ENCODE measurements at regions of chr2 and their contacts with region 1.

Region 1: DNA sequence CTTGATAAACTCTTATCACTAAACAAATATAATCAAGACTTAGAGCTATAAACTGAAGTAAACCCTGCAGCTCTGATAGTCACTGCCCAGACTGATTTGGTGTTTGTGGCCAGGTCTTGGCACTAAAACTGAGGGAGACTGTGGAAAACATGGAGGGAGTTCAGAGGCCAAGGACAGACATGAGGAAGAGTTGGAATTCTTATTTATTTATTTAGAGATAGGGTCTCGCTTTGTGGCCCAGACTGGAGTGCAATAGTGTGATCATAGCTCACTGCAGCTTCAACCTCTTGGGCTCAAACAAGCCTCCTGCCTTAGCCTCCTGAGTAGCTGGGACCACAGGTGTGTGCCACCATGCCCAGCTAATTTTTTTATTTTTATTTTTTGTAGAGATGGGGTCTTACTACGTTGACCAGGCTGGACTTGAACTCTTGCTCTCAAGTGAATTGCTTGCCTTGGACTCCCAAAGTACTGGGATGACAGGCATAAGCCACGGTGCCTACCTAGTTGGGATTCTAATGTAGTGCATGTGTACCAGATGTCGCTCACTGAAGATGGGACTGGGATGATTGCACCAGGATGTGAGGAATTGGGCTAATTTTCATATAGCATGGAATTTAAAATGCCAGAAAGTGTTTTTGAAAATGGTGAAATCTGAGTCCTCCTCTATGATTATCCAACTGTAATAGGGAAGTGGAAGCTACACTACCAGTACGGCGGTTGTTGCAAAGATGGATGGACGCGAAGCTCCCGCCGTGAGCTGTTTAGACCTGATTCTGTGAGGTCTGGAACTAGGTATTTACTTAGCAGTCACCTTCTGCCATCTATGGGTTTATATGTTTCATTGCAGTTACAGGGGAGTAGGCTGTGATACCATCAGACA is 52.7 kb upstream of the CTLA4 start:
- DNase-seq: peak in 1 of 2 donors; percentile 66
- ATAC-seq: peak; percentile 85
- H3K4me3 ChIP-seq: no peak overlapping the region
- H3K27ac ChIP-seq: no peak overlapping the region
- H3K4me1 ChIP-seq: peaks cover 0 to 2% of the 10 kb centered on the region in 2 donors
- H3K27me3 ChIP-seq: no peaks in the 10 kb centered on the region

Region 2: GRCh38 chr2:203484266-203485112 is 330.4 kb before region 1 on chr2:
- intact Hi-C with region 1: loop called (anchors 1 to 5 kb)
- DNase-seq: no peak
- ATAC-seq: peak; percentile 73
- H3K4me3 ChIP-seq: no peak overlapping the region
- H3K27ac ChIP-seq: no peak overlapping the region
- H3K4me1 ChIP-seq: peaks cover 0 to 2% of the 10 kb centered on the region in 2 donors
- H3K27me3 ChIP-seq: no peaks in the 10 kb centered on the region

Region 3: DNA sequence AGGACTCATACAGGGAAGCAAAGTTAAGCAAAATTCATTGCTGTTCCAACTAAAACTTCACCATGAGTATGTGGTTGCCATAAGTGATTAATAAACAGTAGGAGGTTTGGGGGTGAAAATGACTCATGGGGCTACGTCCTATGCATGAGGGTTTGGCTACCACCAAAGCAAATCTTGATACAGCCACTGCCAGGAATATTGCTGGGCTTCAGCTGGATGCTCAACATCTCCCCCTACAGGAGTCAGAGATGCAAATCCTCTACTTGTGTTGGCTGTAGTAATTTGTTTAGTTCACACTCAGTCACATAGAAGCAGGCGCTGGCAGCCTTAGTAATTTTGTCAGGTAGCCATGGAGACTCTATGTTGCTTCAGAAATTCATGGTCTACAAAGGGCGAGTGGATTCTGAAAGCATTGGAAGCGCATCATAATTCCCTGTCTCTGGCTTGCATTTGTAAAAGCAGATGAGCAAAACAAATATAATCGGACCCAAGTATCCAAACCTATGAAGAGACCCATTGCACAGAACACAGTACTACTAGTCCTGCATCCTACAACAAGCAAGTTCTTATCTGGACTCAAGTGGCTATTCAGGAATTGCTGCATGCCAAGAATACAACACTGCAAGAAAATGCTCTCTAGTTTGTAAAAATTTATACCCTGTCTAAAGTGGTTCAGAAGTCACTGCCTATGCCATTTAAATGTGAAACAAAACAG is 32.5 kb before region 1 on chr2:
- intact Hi-C with region 1: no loop called
- DNase-seq: peak in 1 of 2 donors; percentile 65
- ATAC-seq: peak; percentile 73
- H3K4me3 ChIP-seq: no peak overlapping the region
- H3K27ac ChIP-seq: no peak overlapping the region
- H3K4me1 ChIP-seq: peaks cover 0 to 3% of the 10 kb centered on the region in 2 donors
- H3K27me3 ChIP-seq: no peaks in the 10 kb centered on the region

Region 4: GRCh38 chr2:203909261-203909967 is 94.5 kb after region 1 on chr2:
- intact Hi-C with region 1: loop called in 1 of 2 experiments (anchors 10 kb)
- DNase-seq: no peak
- ATAC-seq: peak; percentile 89
- H3K4me3 ChIP-seq: peak overlapping the region; percentile 21 to 33
- H3K27ac ChIP-seq: peak overlapping the region in 1 of 2 donors; percentile 79
- H3K4me1 ChIP-seq: peaks cover 0 to 4% of the 10 kb centered on the region in 2 donors
- H3K27me3 ChIP-seq: no peaks in the 10 kb centered on the region

Measured in aorta (tissue), 5 donors.